ENCODE measurements at regions of chr14 and their contacts with region 1.

Region 1: DNA sequence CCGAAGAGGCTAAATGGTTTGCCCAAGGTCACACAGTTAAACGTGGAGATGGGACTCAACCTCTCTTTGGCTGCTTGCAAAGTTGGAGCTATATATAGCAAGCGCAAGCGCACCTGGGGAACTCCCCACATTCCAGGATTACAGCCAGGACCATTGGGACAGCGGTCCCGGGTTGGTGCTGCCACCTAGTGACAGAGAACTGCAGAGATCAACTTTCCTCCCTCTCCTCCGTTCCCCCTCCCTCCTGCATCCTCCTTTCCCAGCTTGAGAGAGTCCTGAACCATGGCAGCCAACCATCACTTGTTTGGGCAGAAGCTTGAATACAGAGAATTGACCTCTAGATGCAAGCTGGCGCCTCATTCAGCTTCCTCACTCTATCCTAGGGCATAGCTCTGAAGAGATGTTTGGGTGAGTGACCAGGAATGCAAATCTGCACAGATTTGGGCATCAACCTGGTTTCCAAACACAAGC is 17.4 kb upstream of the FLVCR2 start:
- DNase-seq: peak; percentile 88
- ATAC-seq: peak; percentile 99
- H3K4me3 Mint-ChIP-seq: no peak overlapping the region
- H3K27ac Mint-ChIP-seq: peak overlapping the region; percentile 14; the same call in 1 of the 2 replicates
- H3K4me1 Mint-ChIP-seq: peaks cover 12% of the 10 kb centered on the region
- H3K27me3 Mint-ChIP-seq: peaks cover 2% of the 10 kb centered on the region; the same call in 1 of the 2 replicates
- CTCF ChIP-seq: peak; percentile 68

Region 2: DNA sequence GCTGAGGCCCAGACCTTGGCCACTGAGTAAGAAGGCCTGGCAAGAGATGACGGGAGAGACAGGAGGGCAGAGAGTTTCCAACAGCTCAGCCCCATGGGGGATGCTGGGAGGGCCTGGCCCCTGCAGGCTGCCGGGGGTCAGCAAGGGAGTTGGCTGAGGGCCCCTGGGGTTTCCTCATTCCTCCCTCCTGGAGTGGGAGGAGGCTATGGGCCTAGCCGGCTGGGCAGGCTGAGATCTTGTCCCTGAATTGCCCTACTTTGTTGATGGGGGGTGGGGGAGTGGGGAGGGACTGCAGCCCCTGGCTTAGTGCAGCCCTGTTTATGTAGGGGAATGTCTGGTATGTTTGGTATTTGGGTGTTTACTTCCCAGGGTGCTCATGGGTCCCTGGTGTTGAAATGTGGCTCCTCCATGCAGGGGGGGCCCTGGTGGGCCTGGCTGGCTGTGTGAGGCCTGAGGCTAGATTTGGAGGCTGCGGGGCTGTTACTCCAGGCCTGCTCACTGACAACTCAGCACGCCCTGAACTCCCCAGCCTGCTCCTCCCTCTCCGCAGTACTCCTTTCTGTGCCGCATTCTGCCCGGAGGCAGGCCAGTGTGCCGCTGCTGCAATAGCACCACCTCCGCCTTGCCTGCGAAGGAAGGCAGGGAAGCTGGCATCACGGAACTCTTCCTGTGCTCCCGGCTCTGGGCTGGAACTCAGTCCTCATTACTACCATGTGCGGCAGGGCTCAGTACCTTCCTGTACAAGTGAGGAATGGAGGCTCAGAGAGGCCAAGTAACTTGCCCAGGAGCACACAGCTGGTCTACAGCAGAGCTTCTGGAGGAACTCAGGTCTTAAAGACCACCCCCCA is 107.9 kb before region 1 on chr14:
- CTCF ChIA-PET with region 1: interaction called, 18 read pairs
- POLR2A ChIA-PET with region 1: no interaction called
- DNase-seq: peak; percentile 84
- ATAC-seq: peak; percentile 89
- H3K4me3 Mint-ChIP-seq: 0 out of 2 replicates have a peak overlapping the region, but pooled peaks have one; percentile 25
- H3K27ac Mint-ChIP-seq: peak overlapping the region; percentile 100
- H3K4me1 Mint-ChIP-seq: peaks cover 70% of the 10 kb centered on the region
- H3K27me3 Mint-ChIP-seq: no peaks in the 10 kb centered on the region
- CTCF ChIP-seq: no peak

Region 3: DNA sequence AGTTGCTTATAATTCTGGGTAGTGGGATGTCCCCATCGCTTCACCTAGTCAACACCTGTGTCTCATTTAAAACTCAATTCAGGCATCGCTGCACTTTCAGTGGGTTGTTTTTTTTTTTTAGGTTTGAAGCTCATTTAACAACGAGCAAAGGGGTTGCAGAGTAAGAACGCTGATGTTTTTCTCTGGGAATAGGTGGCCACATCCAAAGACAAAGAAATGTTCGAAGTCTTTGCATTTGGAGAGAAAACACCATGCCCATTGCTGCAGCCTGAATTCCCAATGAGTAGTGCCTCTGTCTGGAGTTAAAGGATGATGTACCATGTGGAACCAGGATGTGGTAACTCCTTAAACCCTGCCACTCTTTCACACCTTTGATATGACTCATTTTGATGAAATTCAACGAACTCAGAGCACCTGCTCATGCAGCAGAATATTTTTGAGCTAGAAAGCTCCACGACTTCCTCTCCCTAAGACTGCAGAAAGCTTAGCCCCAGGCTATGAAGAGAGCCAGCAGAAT is 73.8 kb before region 1 on chr14:
- CTCF ChIA-PET with region 1: interaction called, 34 read pairs
- POLR2A ChIA-PET with region 1: no interaction called
- DNase-seq: no peak
- ATAC-seq: no peak
- H3K4me3 Mint-ChIP-seq: no peak overlapping the region
- H3K27ac Mint-ChIP-seq: no peak overlapping the region
- H3K4me1 Mint-ChIP-seq: no peaks in the 10 kb centered on the region
- H3K27me3 Mint-ChIP-seq: no peaks in the 10 kb centered on the region; the same call in 1 of the 2 replicates
- CTCF ChIP-seq: no peak

Region 4: DNA sequence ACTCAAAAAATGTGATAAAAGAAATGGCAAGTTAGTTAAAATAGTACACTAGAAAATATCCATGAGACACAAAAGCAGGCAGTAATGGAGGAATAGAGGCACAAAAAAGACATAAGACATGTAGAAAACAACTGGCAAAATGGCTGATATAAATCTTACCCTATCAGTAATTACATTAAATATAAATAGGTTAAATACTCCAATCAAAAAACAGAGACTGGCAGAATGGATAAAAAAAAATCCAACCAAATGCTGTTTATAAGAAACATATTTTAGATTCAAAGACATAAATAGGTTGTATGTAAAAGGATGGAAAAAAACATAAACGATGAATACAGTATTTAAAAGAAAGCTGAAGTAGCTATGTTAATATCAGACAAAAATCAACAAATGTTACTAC is 54.1 kb before region 1 on chr14:
- CTCF ChIA-PET with region 1: interaction called, 13 read pairs
- POLR2A ChIA-PET with region 1: no interaction called
- DNase-seq: no peak
- ATAC-seq: no peak
- H3K4me3 Mint-ChIP-seq: no peak overlapping the region
- H3K27ac Mint-ChIP-seq: no peak overlapping the region
- H3K4me1 Mint-ChIP-seq: no peaks in the 10 kb centered on the region
- H3K27me3 Mint-ChIP-seq: no peaks in the 10 kb centered on the region
- CTCF ChIP-seq: no peak

Region 5: DNA sequence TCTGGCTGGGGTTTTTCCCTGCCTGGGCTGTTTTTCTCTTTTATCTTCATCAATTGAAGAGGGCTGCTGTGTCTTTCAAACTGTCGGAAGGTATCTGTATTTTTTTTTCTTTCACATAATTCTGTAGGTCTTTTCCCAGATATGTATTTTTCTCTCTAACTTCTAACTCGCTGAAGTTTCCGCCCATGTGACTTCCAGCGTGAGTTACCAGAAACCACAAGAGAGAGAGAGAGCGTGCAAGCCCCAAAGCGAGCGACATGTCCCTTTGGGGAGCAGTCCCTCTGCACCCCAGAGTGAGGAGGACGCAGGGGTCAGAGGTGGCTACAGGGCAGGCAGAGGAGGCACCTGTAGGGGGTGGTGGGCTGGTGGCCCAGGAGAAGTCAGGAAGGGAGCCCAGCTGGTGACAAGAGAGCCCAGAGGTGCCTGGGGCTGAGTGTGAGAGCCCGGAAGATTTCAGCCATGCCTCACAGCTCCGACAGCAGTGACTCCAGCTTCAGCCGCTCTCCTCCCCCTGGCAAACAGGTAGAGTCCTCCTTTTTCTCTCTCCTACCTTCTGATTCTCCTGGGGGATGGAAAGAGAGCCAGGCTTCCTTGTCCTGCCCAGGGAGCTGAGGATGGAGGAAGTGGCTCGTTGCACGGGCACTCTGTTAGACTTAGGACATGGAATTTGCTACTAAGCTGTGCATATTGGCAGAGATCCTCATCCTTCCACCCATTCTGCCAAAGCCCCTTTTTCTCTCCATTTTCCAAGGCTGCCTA is 38.6 kb before region 1 on chr14 and contains the start of gene BATF:
- CTCF ChIA-PET with region 1: interaction called, 87 read pairs
- POLR2A ChIA-PET with region 1: interaction called, 3 read pairs
- DNase-seq: no peak
- ATAC-seq: no peak
- H3K4me3 Mint-ChIP-seq: no peak within 1 kb of the TSS
- H3K27ac Mint-ChIP-seq: no peak within 1 kb of the TSS
- H3K4me1 Mint-ChIP-seq: peaks cover 8% of the 10 kb centered on the region
- H3K27me3 Mint-ChIP-seq: no peaks in the 10 kb centered on the region; the same call in none of the 2 replicates
- CTCF ChIP-seq: no peak
- total RNA-seq, gene BATF: 0.73 TPM in 1 of 3 replicates, not detected in the others

Region 6: DNA sequence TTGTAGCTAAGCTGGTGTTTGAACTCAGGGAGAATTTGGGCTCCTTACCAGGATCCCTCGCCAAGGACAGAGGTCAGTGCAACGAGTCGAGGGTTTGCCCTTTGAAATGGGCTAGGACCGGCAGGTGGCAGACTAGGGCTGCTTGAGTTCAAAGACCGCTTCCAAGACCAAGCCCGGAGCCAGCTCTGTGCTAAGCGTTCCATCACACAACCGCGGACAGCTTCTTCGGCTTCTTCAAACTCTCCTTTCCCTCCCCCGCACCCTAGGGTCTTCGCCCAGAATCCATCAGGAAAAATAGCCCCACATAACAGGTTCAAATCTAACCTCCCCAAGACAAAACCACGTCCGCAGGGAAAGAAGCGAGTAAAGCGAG is 16.7 kb after region 1 on chr14:
- CTCF ChIA-PET with region 1: interaction called, 70 read pairs
- POLR2A ChIA-PET with region 1: interaction called, 6 read pairs
- DNase-seq: peak; percentile 87
- ATAC-seq: peak; percentile 92
- H3K4me3 Mint-ChIP-seq: no peak overlapping the region; the same call in 1 of the 2 replicates
- H3K27ac Mint-ChIP-seq: peak overlapping the region; percentile 78
- H3K4me1 Mint-ChIP-seq: no peaks in the 10 kb centered on the region; the same call in 1 of the 2 replicates
- H3K27me3 Mint-ChIP-seq: no peaks in the 10 kb centered on the region; the same call in none of the 2 replicates
- CTCF ChIP-seq: no peak

Region 7: DNA sequence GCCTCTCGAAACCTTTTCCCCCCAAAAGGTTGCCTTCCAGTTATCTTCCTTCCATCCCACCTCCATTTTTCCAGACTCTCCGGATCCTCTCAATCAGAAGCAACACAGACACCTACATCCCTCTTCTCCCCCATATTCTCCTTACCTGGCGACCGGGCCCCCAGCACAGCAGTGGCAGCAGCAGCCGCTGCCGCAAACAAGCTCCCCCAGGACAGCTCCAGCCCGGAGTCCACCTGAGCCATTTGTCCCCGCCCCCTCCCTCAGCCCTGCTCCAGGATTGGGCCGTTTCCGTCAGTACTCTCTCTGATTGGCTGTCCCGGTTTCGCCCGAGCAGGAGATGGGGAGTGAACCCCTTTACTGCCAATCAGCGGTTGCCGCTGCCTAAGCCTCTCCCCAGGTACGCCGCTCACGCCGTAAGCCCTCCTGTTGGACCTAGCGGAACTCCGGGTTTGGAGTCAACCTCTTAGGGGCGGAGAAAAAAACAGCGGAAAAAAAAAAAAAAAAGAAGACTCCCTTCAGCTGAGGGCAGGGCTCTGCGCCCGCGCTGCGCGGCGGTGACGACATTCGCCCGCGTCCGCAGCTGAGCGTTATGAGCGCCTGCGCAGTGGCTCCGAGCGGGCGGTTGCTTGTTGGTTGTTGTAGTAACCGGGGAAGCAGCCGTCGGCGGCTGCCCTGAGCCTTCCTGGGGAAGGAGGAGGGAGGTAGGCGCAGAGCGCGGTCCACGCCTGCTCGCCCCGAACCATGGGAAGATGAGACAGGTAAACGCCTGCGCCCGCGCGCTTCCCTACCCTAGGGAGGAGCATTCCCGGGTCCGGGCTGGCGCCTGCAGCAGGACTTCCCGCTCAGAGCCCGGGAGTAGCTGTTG is 99.9 kb after region 1 on chr14 and contains the starts of genes ERG28 and TTLL5:
- CTCF ChIA-PET with region 1: interaction called, 17 read pairs
- POLR2A ChIA-PET with region 1: no interaction called
- DNase-seq: peak; percentile 97
- ATAC-seq: peak; percentile 96
- H3K4me3 Mint-ChIP-seq: peak within 1 kb of the TSS; percentile 92
- H3K27ac Mint-ChIP-seq: peak within 1 kb of the TSS; percentile 95
- H3K4me1 Mint-ChIP-seq: peaks cover 17% of the 10 kb centered on the region
- H3K27me3 Mint-ChIP-seq: no peaks in the 10 kb centered on the region
- CTCF ChIP-seq: no peak
- total RNA-seq, gene ERG28: 27.9 to 29.9 TPM (median 29.4 TPM) in 3 replicates
- total RNA-seq, gene TTLL5: 39.6 to 42.6 TPM (median 40.8 TPM) in 3 replicates

Measured in WTC11 (cell line).